ENCODE measurements at regions of chr17 and their contacts with region 1.

Region 1: GRCh38 chr17:3738562-3739295 is 15.0 kb downstream of the HASPIN start:
- DNase-seq: peak; percentile 10
- ATAC-seq: peak; percentile 16
- H3K4me3 ChIP-seq: no peak overlapping the region
- H3K27ac ChIP-seq: no peak overlapping the region
- H3K4me1 ChIP-seq: peaks cover 7% of the 10 kb centered on the region; the same call in 1 of the 2 replicates
- H3K27me3 ChIP-seq: peaks cover 9% of the 10 kb centered on the region; the same call in 1 of the 2 replicates
- CTCF ChIP-seq: no peak
- POLR2A ChIP-seq: no peak
- RAD21 ChIP-seq: no peak

Region 2: GRCh38 chr17:3048767-3049471 is 689.8 kb before region 1 on chr17:
- CTCF ChIA-PET with region 1: no interaction called
- POLR2A ChIA-PET with region 1: no interaction called
- dilution Hi-C with region 1: no loop called
- in situ Hi-C with region 1: no loop called
- intact Hi-C with region 1: loop called (anchors 10 kb)
- DNase-seq: peak; percentile 97
- ATAC-seq: peak; percentile 100
- H3K4me3 ChIP-seq: peak overlapping the region; percentile 69
- H3K27ac ChIP-seq: peak overlapping the region; percentile 61
- H3K4me1 ChIP-seq: no peaks in the 10 kb centered on the region
- H3K27me3 ChIP-seq: no peaks in the 10 kb centered on the region
- CTCF ChIP-seq: peak; percentile 64
- POLR2A ChIP-seq: no peak
- RAD21 ChIP-seq: peak; percentile 71

Region 3: DNA sequence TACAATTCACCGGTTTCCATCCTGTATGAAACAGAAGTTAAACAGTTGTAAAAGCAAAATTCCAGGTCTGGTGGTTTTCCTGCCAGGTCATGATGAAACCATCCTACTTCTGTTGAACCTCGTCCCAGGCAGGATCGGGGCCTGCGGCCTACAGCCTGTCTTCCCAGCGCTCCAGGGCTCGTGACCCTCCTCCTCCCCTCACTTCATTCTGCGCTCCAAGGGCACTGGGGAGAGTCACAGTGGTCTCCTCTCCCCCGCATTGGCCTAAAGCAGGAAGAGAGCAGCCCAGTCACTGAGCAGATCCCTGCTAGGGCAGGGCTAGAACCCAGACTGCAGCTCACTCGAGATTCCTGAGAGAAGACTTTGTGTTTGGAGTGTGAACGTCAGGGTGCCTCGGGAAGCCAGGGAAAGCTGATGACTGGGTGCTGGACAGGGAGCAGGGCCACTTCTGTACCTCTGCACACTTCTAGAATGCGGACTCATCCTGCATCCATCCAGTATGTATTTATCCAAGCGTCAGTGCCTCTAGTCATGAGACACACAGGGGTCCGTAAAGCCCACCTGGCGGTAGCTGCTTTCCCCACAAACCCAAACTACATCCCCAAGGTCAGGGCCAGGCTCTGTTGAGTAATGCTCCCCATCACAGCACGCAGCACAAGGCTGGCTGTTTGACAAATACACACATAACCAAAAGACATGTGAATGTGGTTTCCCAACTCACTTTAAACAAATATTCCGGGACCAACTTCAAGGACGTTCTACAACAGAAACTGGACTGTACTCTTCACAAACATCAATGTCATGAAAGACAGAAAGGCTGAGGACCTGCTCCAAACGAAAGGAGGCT is 64.0 kb after region 1 on chr17:
- CTCF ChIA-PET with region 1: interaction called, 10 read pairs
- POLR2A ChIA-PET with region 1: no interaction called
- dilution Hi-C with region 1: no loop called
- in situ Hi-C with region 1: no loop called
- intact Hi-C with region 1: loop called (anchors 2 kb)
- DNase-seq: peak; percentile 90
- ATAC-seq: peak; percentile 73
- H3K4me3 ChIP-seq: no peak overlapping the region
- H3K27ac ChIP-seq: peak overlapping the region; percentile 87
- H3K4me1 ChIP-seq: peaks cover 25% of the 10 kb centered on the region
- H3K27me3 ChIP-seq: no peaks in the 10 kb centered on the region
- CTCF ChIP-seq: no peak
- POLR2A ChIP-seq: no peak
- RAD21 ChIP-seq: no peak

Region 4: DNA sequence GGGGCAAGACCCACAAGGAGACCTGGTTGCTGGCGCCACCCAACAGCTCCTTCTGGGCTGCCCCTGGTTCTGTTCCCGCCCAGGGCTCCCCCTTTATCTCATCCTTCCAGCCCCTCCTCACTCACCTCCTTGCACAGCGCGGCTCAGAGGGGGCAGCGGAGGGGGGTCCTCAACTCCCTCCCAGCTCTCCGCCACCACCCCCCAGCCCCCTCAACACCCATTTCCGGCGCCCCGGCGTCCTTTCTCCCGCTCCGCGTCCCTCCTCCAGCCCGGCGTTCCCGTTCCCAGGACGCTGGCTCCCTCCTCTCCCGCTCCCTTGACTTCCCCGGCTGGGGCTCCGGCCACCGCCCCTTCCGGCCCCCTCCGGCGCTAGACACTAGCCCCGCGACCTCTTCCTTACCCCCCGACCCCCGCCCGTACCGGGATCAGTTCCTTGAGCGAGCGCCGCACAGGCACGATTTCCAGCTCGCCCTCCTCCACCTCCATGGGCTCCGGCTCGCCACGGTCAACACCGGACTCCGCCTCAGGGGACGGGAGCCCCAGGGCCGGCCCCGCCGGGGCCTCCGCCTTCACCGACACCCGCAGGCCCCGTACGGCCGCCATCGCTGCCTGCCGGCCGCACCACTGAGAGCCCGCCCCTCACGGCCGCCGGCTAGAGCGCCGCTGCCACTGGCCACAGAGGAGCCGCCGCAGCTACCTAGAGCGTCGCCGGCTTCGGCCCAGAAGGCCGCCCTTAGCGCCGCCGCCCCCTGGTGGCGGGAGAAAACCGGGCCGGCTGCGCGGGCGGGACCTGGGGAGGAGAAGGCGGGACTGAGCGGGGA is 107.1 kb after region 1 on chr17 and contains the start of gene NCBP3:
- CTCF ChIA-PET with region 1: interaction called, 18 read pairs
- POLR2A ChIA-PET with region 1: interaction called, 3 read pairs
- dilution Hi-C with region 1: no loop called
- in situ Hi-C with region 1: no loop called
- intact Hi-C with region 1: loop called (anchors 1 kb)
- DNase-seq: peak; percentile 91
- ATAC-seq: peak; percentile 100
- H3K4me3 ChIP-seq: peak within 1 kb of the TSS; percentile 88
- H3K27ac ChIP-seq: peak within 1 kb of the TSS; percentile 95
- H3K4me1 ChIP-seq: peaks cover 3% of the 10 kb centered on the region
- H3K27me3 ChIP-seq: peaks cover 6% of the 10 kb centered on the region
- CTCF ChIP-seq: peak; percentile 98
- POLR2A ChIP-seq: peak; percentile 95
- RAD21 ChIP-seq: peak; percentile 36
- total RNA-seq, gene NCBP3: 10.8 and 15.6 TPM in 2 replicates

Region 5: DNA sequence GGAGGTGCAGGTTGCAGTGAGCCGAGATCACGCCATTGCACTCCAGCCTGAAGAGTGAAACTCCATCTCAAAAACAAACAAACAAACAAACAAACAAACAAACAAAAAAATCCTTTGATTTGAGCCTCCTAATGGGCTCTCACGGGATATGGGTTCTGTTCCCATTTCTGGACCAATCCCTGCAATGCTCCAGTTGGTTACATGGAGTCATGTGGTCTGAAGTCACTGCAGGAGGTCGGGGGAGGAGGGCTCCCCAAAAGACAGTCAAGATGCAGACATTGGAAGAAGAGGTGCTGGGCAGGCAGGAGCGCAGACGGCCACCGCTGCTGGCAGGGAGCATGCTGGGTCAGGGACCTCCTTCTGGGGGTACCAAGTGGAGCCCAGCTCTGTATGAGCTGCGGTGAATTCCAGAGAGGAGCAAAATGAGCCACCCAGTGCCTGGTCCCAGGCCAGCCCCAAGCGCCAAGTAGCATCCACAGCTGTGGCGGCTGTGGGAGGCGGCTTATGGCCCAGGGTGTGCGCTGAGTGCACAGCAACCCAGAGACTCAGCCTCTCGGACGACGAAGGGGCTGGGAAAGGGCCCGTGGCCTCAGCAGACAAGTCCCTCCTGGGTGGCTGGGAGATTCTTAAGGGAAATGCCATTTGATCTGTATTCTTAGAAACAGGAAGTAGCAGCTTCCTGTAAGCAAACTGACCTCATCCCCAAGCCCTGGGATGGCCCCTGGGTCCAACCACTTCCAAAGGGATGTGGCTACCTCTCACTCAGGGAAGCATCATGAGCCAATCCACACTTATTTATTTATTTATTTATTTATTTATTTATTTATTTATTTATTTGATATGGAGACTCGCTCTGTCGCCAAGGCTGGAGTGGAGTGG is 245.1 kb after region 1 on chr17:
- CTCF ChIA-PET with region 1: no interaction called
- POLR2A ChIA-PET with region 1: interaction called, 15 read pairs
- dilution Hi-C with region 1: no loop called
- in situ Hi-C with region 1: no loop called
- intact Hi-C with region 1: no loop called
- DNase-seq: peak; percentile 55
- ATAC-seq: peak; percentile 54
- H3K4me3 ChIP-seq: no peak overlapping the region
- H3K27ac ChIP-seq: no peak overlapping the region
- H3K4me1 ChIP-seq: peaks cover 5% of the 10 kb centered on the region; the same call in 1 of the 2 replicates
- H3K27me3 ChIP-seq: peaks cover 5% of the 10 kb centered on the region; the same call in 1 of the 2 replicates
- CTCF ChIP-seq: no peak
- POLR2A ChIP-seq: no peak
- RAD21 ChIP-seq: no peak

Region 6: GRCh38 chr17:4074831-4075495 is 336.2 kb after region 1 on chr17:
- CTCF ChIA-PET with region 1: no interaction called
- POLR2A ChIA-PET with region 1: no interaction called
- dilution Hi-C with region 1: no loop called
- in situ Hi-C with region 1: no loop called
- intact Hi-C with region 1: loop called (anchors 10 kb)
- DNase-seq: peak; percentile 47
- ATAC-seq: peak; percentile 63; the same call in 1 of the 2 replicates
- H3K4me3 ChIP-seq: no peak overlapping the region
- H3K27ac ChIP-seq: no peak overlapping the region
- H3K4me1 ChIP-seq: peaks cover 6% of the 10 kb centered on the region
- H3K27me3 ChIP-seq: no peaks in the 10 kb centered on the region
- CTCF ChIP-seq: peak; percentile 62
- POLR2A ChIP-seq: no peak
- RAD21 ChIP-seq: peak; percentile 60

Measured in IMR-90 (cell line).